ENCODE measurements at regions of chr2 and their contacts with region 1.

Region 1: DNA sequence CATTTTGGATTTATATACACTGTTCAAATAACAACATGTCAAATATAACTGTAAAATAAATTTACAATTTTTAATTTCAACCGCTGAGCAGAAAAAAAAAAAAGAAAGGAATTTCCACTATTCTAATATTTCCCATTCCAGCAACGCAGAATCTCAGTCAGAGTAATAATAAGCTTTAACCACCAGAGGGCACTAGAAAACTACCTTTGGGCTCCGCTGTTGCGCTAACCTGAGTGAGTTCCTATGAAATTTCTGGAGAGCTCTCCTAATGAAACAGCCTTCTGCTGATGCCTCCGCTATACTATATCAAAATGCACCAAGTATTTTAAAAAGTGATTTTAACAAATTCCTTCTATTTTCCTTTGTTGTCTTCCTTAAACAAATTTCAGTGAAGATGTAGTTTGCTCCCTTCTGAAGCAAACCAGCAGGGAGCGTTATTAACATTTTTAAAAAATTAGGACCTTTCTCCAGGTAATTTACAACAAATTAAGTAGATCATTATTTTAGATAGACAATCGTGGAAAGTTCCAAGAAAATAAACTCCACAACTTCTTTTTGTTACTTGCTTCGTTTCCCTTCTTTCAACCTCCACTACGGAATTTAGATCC is 23.0 kb downstream of the ERMN start:
- DNase-seq: peak; percentile 44
- ATAC-seq: peak; percentile 59
- H3K4me3 ChIP-seq: no peak overlapping the region
- H3K27ac ChIP-seq: no peak overlapping the region
- H3K4me1 ChIP-seq: peaks cover 4% of the 10 kb centered on the region; the same call in 1 of the 2 replicates
- H3K27me3 ChIP-seq: no peaks in the 10 kb centered on the region
- CTCF ChIP-seq: peak; percentile 70
- POLR2A ChIP-seq: no peak
- RAD21 ChIP-seq: peak; percentile 67

Region 2: DNA sequence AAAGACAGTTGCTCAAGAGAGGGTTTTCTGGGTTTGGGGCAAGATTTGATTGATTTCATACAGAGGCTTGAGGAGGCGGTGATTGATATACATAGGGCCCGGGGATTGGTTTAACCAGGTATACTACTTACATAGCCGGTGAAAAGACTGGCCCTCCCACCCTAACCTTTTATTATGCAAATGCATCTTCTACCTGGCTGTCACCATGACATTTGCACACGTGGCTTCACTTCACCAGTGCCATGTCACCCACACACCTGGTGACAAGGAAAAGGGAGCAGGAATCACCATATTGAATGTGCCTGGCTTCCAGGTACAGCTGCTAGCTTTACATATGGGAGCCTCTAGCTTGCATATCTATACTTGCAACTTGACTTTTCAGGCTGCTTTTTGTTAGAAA is 13.3 kb after region 1 on chr2:
- CTCF ChIA-PET with region 1: interaction called, 11 read pairs
- POLR2A ChIA-PET with region 1: no interaction called
- dilution Hi-C with region 1: no loop called
- in situ Hi-C with region 1: no loop called
- intact Hi-C with region 1: no loop called
- DNase-seq: no peak
- ATAC-seq: no peak
- H3K4me3 ChIP-seq: no peak overlapping the region
- H3K27ac ChIP-seq: no peak overlapping the region
- H3K4me1 ChIP-seq: peaks cover 2% of the 10 kb centered on the region; the same call in 1 of the 2 replicates
- H3K27me3 ChIP-seq: no peaks in the 10 kb centered on the region
- CTCF ChIP-seq: no peak
- POLR2A ChIP-seq: no peak
- RAD21 ChIP-seq: no peak